ENCODE measurements at regions of chr11 and their contacts with region 1.

Region 1: GRCh38 chr11:35289821-35290220 is 129.5 kb downstream of the SLC1A2 start:
- DNase-seq: no peak
- H3K4me3 ChIP-seq: no peak overlapping the region
- H3K27ac ChIP-seq: peak overlapping the region; percentile 61 to 71
- H3K4me1 ChIP-seq: peaks cover 0 to 30% (median 17%) of the 10 kb centered on the region in 4 donors
- H3K27me3 ChIP-seq: no peaks in the 10 kb centered on the region
- CTCF ChIP-seq: no peak

Region 2: DNA sequence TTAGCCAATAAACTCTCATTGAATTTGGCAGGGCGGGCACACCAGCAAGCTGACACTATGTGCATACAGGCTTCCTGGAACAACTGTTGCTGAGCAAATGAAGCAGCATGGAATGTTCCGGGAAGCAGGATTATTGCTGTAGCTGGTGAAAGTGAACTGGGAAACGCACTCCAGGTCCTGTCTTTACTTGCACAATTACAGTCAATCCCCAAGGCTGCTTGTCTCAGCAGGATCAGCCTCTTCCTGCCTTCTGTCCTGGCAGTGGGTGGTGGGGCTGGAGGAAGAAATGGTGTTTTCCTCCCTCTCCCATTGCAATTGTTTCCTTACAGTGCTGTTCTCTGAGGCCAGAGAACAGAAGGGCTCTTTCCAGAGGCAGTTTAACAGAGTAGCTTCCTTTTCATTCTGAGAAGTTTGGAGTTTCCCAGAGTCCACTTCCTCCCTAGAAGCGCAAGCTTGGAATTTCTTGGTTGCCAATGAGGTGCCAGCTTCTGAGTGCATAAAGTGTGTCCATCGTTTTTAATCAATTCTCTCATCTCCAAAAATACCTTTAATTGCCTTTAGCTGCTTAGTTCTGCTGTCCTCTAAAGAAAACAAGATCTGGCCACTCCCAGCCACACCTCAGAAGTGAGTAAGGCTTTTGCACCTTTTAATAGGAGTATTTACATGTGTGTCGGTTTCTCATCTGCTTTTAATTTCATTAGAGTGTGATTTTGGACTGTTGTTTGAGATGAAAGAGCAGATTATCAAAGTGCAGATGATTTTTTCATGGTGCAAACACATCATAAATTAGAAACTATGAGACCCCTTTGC is 130.9 kb before region 1 on chr11:
- intact Hi-C with region 1: loop called (anchors 10 kb)
- DNase-seq: peak in 1 of 2 donors; percentile 72
- H3K4me3 ChIP-seq: no peak overlapping the region
- H3K27ac ChIP-seq: peak overlapping the region; percentile 38 to 45
- H3K4me1 ChIP-seq: peaks cover 0 to 85% (median 52%) of the 10 kb centered on the region in 4 donors
- H3K27me3 ChIP-seq: no peaks in the 10 kb centered on the region
- CTCF ChIP-seq: no peak

Region 3: GRCh38 chr11:35257281-35257680 is 32.5 kb before region 1 on chr11:
- intact Hi-C with region 1: no loop called
- DNase-seq: no peak
- H3K4me3 ChIP-seq: no peak overlapping the region
- H3K27ac ChIP-seq: no peak overlapping the region
- H3K4me1 ChIP-seq: peaks cover 0 to 48% (median 10%) of the 10 kb centered on the region in 4 donors
- H3K27me3 ChIP-seq: no peaks in the 10 kb centered on the region
- CTCF ChIP-seq: no peak

Measured in tibial artery (tissue), 4 donors.